Activated CD4-positive, alpha-beta memory T cell treated with anti-CD3 and anti-CD28 coated beads for 36 hours (primary cell): ENCODE measurements at regions of chr7 and their contacts with region 1.

Region 1: GRCh38 chr7:116218051-116218645 is 7.8 kb downstream of the TES start:
- DNase-seq: no peak
- H3K4me3 Mint-ChIP-seq: no peak overlapping the region
- H3K27ac Mint-ChIP-seq: peak overlapping the region; percentile 61
- H3K4me1 Mint-ChIP-seq: peaks cover 84% of the 10 kb centered on the region
- H3K27me3 Mint-ChIP-seq: no peaks in the 10 kb centered on the region

Region 2: GRCh38 chr7:116230191-116231005 is 12.2 kb after region 1 on chr7:
- CTCF ChIA-PET with region 1: interaction called, 75 read pairs
- POLR2A ChIA-PET with region 1: interaction called, 7 read pairs
- intact Hi-C with region 1: loop called (anchors 1 kb)
- DNase-seq: no peak
- H3K4me3 Mint-ChIP-seq: no peak overlapping the region
- H3K27ac Mint-ChIP-seq: peak overlapping the region; percentile 49
- H3K4me1 Mint-ChIP-seq: peaks cover 82% of the 10 kb centered on the region
- H3K27me3 Mint-ChIP-seq: no peaks in the 10 kb centered on the region

Region 3: DNA sequence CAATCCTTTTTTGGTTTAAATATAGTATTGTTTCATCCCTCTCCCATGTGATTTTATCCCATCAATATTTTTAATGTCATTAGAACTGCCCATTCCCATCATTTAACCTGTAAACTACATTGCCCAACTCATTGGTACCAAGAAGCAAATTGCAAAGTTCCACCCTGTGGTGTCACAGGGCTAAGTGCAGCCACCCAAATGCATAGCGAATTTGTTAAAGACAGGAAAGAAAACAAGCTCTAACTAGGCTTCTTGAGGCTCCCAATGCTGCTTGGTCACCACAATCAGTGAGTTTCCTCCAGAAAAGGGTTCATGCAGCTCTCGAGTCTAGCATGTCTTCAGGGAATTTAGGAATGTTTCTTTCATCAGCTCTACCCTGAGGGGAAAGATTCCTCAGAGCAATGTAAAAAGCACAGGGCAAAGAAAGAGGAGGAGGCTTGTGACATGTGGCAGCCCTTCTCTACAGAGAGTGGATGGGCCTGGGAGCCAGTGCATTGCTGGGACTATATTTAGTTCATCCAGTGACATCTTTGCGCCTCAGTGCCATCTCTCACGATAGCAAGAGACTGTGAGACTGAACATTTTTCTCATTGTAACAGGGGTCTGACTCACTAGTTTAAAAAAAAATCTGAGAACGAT is 364.8 kb after region 1 on chr7:
- CTCF ChIA-PET with region 1: no interaction called
- POLR2A ChIA-PET with region 1: no interaction called
- intact Hi-C with region 1: no loop called
- DNase-seq: no peak
- H3K4me3 Mint-ChIP-seq: no peak overlapping the region
- H3K27ac Mint-ChIP-seq: no peak overlapping the region
- H3K4me1 Mint-ChIP-seq: peaks cover 10% of the 10 kb centered on the region
- H3K27me3 Mint-ChIP-seq: peaks cover 2% of the 10 kb centered on the region